BJ (cell line): ENCODE measurements at regions of chr16 and their contacts with region 1.

Region 1: DNA sequence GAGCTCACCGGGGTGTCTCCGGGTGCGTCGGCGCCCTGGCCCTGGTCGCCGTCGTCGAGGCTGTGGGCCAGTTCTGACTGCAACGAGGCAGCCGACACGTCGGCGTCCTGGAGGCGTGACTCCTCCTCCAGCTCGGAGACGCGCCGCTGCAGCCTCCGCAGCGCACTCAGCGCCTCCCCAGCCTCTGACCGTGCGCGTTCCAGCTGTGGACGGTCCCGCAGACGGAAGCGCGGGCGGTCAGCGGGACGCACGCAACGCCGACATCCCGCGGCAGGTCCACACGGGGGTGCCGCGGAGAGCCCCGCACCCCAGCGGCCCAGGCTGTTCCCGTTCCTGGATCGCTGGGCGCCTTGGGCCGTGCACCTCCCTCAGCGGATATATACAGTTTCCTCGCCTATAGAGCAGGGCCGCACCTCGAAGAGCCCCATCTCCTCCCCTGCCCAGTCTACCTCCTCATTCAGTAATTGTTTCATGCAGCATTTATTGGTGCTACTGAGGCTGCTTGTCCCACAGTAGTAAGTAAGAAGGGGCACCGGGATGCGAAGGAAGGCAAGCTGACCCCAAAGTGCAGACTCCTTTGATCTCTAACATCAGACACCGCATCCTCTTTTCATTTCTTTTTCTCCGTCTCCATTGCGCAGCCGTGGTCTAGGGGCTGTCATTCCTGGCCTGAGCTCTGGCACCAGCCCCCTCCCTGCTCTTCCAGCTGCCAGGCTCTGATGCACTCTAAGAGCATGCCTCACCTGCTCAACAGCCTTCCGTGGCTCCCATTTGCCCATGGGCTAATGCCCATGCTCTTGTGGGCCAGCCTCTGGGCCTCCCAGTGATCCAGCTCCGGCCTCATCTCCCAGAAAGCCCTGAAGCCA is 5.9 kb downstream of the THOC6 start:
- DNase-seq: no peak
- H3K4me3 ChIP-seq: no peak overlapping the region
- H3K27me3 ChIP-seq: peaks cover 16% of the 10 kb centered on the region
- CTCF ChIP-seq: no peak

Region 2: DNA sequence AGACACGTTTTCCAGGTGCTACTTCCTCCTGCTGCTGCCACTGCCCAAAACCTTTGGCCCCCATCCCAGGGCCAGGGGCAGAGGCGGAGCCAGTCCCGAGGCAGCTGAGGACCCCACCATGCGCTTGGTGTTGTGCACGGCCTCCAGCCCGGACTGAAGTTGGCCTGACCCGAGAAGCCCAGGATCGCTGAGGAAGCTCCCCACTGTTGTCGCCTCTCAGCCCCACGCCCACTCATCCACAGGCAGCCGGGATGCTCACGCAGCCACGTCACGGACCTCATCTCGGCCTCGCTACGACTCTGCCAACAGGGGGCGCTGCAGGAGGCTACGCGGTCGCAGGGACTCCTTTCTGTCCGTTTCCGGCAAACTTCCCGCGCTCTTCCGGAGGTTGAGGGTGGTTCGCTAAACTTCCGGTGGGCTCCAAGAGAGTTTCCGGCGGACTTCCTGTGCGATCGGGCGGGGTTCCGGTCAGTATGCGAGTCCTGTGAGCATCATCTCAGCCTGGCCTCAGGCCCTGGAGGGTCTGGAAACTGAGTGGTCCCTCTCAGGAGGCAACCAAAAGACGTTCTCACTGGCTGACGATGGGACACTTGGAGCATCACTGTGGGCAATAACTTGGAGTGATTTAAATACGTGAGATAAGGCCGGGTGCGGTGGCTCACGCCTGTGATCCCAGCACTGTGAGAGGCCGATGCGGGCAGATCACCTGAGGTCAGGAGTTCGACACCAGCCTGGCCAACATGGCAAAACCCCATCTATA is 187.3 kb before region 1 on chr16:
- CTCF ChIA-PET with region 1: no interaction called
- POLR2A ChIA-PET with region 1: no interaction called
- DNase-seq: no peak
- H3K4me3 ChIP-seq: no peak overlapping the region
- H3K27me3 ChIP-seq: peaks cover 10% of the 10 kb centered on the region
- CTCF ChIP-seq: peak; percentile 49

Region 3: GRCh38 chr16:3003582-3004302 is 26.0 kb before region 1 on chr16:
- CTCF ChIA-PET with region 1: interaction called, 66 read pairs
- POLR2A ChIA-PET with region 1: no interaction called
- DNase-seq: peak; percentile 91
- H3K4me3 ChIP-seq: peak overlapping the region; percentile 5; the same call in 1 of the 2 replicates
- H3K27me3 ChIP-seq: no peaks in the 10 kb centered on the region; the same call in 1 of the 2 replicates
- CTCF ChIP-seq: peak; percentile 50

Region 4: DNA sequence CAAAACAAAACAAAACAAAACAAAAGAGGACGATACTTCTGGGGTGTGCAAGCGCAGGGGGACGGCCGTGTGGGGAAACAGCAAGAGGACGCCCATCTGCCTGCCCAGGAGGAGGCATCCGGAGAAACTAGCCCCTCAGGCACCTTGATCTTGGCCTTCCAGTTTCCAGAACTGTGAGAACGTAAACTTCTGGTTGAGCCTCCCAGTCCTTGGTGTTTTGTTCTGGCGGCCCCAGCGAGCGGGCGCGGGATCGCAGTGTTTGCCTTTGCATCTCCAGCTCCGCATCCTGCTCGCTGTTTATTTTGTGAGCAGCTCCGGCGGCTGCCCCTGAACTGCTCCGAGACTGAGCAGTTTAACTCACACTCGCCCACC is 15.6 kb after region 1 on chr16:
- CTCF ChIA-PET with region 1: interaction called, 97 read pairs
- POLR2A ChIA-PET with region 1: interaction called, 23 read pairs
- DNase-seq: no peak
- H3K4me3 ChIP-seq: peak overlapping the region; percentile 38
- H3K27me3 ChIP-seq: peaks cover 34% of the 10 kb centered on the region
- CTCF ChIP-seq: no peak

Region 5: GRCh38 chr16:3099732-3100499 is 70.1 kb after region 1 on chr16:
- CTCF ChIA-PET with region 1: interaction called, 15 read pairs
- POLR2A ChIA-PET with region 1: no interaction called
- DNase-seq: no peak
- H3K4me3 ChIP-seq: peak overlapping the region; percentile 20; the same call in 1 of the 2 replicates
- H3K27me3 ChIP-seq: peaks cover 17% of the 10 kb centered on the region
- CTCF ChIP-seq: no peak

Region 6: DNA sequence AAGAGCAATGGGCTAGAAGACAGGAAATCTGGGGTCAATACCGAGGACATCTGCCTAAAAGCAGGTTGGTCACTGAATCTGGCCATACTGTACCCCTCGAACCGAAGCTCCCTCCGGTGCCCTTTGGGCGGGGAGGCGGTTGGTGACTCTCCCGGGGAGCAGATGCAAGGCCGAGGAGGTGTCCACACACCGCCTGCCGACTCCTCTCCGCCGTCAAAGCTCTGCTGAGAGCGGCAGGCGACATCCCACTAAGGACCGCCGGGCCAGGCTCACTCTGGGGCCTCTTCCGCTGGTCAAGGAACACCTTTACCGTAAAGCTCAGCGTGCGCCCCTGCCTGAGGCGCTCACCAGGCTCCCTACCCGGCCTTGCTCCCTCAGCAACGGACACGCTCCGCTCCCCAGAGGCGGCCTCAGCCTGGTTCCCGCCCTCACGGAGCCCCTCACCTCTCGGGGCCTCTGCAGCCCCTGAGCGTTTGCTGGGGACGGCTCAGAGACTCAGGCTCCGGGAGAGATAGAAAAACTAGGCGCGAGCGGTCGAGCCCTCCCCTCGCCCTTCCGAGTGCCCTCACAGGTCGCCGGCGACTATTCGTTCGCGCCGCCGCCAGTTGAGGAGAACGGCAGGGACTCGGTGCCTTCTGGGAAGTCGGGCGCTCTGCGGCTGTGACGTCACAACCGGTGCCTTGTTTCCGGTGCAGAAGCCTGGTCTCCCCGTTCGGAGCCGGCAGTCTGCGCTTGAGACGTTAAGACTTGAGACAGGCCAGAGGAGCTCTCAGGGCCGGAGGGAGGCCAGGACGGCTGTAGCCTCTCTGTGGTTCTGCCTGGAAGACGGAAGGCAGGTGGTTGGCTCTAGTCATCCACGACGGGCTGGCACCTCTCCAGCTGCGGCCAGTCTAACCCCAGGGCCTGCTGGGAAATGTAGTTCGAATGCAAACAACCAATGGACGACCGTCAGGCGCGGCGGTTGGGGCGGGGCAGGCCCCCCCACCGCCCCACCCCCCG is 205.1 kb after region 1 on chr16 and contains the start of gene ZNF200:
- CTCF ChIA-PET with region 1: no interaction called
- POLR2A ChIA-PET with region 1: no interaction called
- DNase-seq: peak; percentile 62
- H3K4me3 ChIP-seq: peak within 1 kb of the TSS; percentile 91
- H3K27me3 ChIP-seq: no peaks in the 10 kb centered on the region
- CTCF ChIP-seq: no peak
- polyA plus RNA-seq, gene ZNF200: 4.0 and 4.8 TPM in 2 replicates